OCI-LY7 (cell line): ENCODE measurements at regions of chr1 and their contacts with region 1.

Region 1: DNA sequence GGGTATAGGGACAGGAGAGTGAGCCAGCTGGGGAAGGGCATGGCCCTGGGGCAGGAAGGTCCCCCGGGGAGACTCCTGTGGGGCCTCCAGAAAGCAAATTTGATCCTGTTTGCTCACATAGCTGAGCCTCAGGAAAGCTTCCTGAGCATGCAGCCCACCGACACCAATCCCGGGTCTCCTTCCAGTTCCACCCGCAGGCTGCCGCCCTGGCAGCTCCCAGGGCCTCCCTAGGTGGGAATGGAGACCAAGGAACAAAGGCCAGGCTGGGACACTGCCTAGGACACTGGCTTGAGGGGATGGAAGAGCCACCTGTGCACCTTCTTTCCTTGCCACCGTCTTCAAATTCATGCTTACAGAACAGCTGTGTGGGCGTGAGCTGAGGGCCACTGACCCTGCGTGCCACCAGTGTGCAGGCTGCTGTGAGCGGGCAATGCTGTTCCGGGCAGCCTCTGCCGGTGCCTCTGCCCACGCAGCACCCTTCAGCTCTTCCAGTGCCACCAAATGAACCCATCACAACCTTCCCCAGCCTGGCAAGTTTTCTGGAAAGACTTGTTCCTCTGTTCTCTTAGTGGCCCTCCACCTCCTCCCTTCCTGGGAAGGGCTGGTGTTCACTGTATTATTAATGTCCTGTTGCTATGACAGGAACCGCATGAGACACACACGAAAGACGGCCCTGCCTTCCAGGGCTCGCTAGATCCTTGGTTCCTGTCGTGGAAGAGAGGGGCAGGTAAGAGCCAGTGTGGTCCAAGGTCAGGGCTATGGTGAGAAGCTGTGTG is 53.6 kb downstream of the ACBD3 start:
- DNase-seq: no peak
- H3K4me3 ChIP-seq: no peak overlapping the region
- H3K27ac ChIP-seq: no peak overlapping the region
- H3K4me1 ChIP-seq: peaks cover 30% of the 10 kb centered on the region
- CTCF ChIP-seq: no peak

Region 2: GRCh38 chr1:226149806-226150205 is 16.9 kb after region 1 on chr1:
- CTCF ChIA-PET with region 1: no interaction called
- POLR2A ChIA-PET with region 1: interaction called, 13 read pairs
- intact Hi-C with region 1: no loop called
- DNase-seq: peak; percentile 50
- H3K4me3 ChIP-seq: no peak overlapping the region
- H3K27ac ChIP-seq: no peak overlapping the region
- H3K4me1 ChIP-seq: peaks cover 26% of the 10 kb centered on the region
- CTCF ChIP-seq: peak; percentile 40; the same call in 1 of the 2 replicates

Region 3: DNA sequence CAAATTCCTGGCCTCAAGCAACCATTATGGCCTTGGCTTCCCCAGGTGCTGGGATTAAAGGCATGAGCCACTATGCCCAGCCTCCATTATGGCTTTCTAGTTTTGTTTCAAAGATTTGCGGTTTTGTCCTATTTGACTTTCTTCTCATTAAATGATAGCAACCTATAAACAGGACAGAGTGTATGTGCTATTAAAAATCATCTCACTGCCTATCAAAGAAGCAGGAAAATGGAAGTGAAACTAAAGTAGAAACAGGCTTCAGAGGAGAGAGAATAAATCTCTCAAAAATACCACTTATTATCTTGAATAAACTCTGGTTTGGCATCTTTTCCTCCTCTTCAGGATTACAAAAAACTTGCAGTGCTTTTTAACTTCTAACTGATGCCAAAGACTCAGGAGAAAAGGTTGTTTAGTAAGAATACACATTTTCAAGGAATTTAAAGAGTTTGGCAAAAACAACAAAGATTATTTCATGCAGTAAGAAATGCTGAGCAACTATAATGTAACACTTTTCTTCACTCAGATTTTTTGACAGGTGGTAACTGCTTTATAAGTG is 24.9 kb after region 1 on chr1:
- CTCF ChIA-PET with region 1: no interaction called
- POLR2A ChIA-PET with region 1: interaction called, 33 read pairs
- intact Hi-C with region 1: loop called (anchors 1 kb)
- DNase-seq: peak; percentile 71
- H3K4me3 ChIP-seq: peak overlapping the region; percentile 26
- H3K27ac ChIP-seq: peak overlapping the region; percentile 85
- H3K4me1 ChIP-seq: peaks cover 58% of the 10 kb centered on the region
- CTCF ChIP-seq: no peak